ENCODE measurements at regions of chr10 and their contacts with region 1.

Region 1: GRCh38 chr10:17737027-17737965 is 14.7 kb upstream of the TMEM236 start:
- DNase-seq: peak in 1 of 3 donors; percentile 27
- ATAC-seq: peak; percentile 53 to 68 (median 66)
- H3K4me3 ChIP-seq: no peak overlapping the region
- H3K27ac ChIP-seq: no peak overlapping the region
- H3K4me1 ChIP-seq: no peaks in the 10 kb centered on the region
- H3K27me3 ChIP-seq: no peaks in the 10 kb centered on the region
- CTCF ChIP-seq: peak; percentile 61 to 74 (median 66)
- POLR2A ChIP-seq: no peak

Region 2: GRCh38 chr10:17607603-17608332 is 129.5 kb before region 1 on chr10:
- intact Hi-C with region 1: loop called (anchors 10 kb)
- DNase-seq: no peak
- ATAC-seq: peak; percentile 89 to 96 (median 94)
- H3K4me3 ChIP-seq: no peak overlapping the region
- H3K27ac ChIP-seq: no peak overlapping the region
- H3K4me1 ChIP-seq: no peaks in the 10 kb centered on the region
- H3K27me3 ChIP-seq: no peaks in the 10 kb centered on the region
- CTCF ChIP-seq: peak; percentile 76 to 91 (median 82)
- POLR2A ChIP-seq: no peak

Region 3: DNA sequence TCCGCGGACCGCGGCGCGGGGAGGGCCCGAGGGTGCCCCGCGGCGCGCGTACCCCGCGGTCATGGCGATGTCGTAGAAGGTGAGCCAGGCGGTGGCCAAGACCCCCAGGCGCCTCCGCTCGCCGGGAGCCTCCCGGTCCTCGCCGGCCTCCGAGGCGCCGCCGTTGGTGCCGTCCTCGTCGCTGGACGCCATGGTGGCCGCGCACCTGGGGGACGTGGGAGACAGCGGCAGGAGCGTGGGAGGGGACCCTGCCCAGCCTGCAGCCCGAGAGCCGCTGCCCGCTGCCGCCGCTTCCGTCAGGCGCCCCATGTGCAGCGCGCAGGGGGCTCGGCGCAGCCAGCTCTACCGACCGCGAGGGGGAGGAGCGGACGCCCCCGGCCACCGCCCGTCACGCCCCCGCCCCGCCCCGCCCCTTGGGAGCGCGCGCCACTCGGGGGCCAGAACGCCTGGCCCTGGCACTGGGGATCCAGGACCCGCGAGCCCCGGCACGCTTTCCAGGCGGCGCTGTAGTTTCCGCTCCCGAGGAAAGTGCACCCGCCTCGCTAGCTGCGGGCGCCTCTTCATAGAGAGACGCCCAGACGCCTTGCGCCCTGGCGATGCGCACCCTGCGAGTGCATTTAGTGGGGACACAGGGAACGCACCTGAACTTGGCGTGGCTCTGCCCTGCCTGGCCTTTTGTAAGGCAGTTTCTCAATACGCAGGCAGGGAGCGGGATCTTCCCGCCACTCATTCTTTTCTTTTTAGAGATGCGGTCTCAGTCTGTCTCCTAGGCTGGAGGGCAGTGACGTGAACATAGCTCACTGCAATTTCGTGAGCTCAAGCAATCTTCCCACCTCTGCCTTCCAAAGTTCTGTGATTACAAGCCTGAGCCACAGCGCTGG is 120.0 kb before region 1 on chr10 and contains the start of gene HACD1:
- intact Hi-C with region 1: loop called in 1 of 2 experiments (anchors 10 kb)
- DNase-seq: peak; percentile 63 to 68 (median 67)
- ATAC-seq: peak; percentile 73 to 79 (median 76)
- H3K4me3 ChIP-seq: peak within 1 kb of the TSS; percentile 67 to 89 (median 73)
- H3K27ac ChIP-seq: peak within 1 kb of the TSS in 2 of 3 donors; percentile 22 to 33
- H3K4me1 ChIP-seq: peaks cover 0 to 5% (median 0%) of the 10 kb centered on the region in 4 donors
- H3K27me3 ChIP-seq: no peaks in the 10 kb centered on the region
- CTCF ChIP-seq: peak in 1 of 4 donors; percentile 9
- POLR2A ChIP-seq: peak; percentile 32
- total RNA-seq, gene HACD1: 0.79 to 6.4 (median 1.7) TPM

Measured in right lobe of liver (tissue), 6 donors.